MCF 10A (cell line): ENCODE measurements at regions of chr3 and their contacts with region 1.

Region 1: GRCh38 chr3:184154885-184155643 is at the start of gene DVL3:
- DNase-seq: peak; percentile 60
- H3K4me3 Mint-ChIP-seq: peak within 1 kb of the TSS; percentile 97
- H3K27ac Mint-ChIP-seq: peak within 1 kb of the TSS; percentile 93
- H3K4me1 Mint-ChIP-seq: peaks cover 13% of the 10 kb centered on the region
- H3K27me3 Mint-ChIP-seq: no peaks in the 10 kb centered on the region
- CTCF ChIP-seq: no peak
- total RNA-seq, gene DVL3: 73.4 and 74.5 TPM in 2 replicates

Region 2: DNA sequence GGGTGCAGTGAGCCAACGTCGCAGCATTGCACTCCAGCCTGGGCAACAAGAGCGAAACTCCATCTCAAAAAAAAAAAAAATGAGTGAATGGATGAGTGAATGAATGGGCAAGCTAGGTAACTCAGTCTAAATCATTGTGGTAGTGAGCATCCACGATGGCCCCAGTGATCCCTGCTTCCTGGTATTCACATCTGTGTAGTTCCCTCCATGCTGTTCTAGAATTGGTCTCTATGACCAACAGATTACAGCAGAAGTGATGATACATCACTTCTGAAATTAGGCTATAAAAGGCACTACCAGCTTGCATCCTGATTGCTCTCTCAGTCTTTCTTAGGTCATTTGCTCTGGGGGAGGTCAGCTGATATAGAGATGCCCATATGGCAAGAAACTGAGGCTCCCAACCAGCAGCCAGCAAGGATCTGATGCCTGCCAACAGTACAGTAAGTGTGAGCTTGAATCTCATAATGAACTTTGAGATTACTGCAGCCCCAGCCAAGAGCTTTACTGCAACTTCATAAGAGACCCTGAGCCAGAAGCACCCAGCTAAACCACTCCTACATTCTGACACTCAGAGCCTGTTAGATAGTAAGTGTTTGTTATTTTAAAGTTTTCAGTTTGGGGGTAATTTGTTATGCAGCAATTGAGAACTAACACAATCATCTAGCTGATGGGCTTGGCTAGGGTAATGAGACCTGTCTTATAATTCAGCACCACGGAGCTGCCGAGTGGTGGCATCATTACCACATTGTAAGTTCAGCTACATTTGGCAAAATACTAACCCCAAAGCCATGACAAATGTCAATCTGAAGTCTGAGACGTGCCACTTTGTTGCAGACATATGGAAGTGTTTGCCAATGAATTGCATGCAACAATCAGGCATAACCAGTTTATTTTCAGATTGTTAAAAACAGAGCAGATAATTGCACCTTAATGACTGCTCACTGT is 652.6 kb before region 1 on chr3:
- CTCF ChIA-PET with region 1: no interaction called
- POLR2A ChIA-PET with region 1: no interaction called
- intact Hi-C with region 1: no loop called
- DNase-seq: peak; percentile 27
- H3K4me3 Mint-ChIP-seq: no peak overlapping the region
- H3K27ac Mint-ChIP-seq: no peak overlapping the region
- H3K4me1 Mint-ChIP-seq: peaks cover 4% of the 10 kb centered on the region
- H3K27me3 Mint-ChIP-seq: no peaks in the 10 kb centered on the region
- CTCF ChIP-seq: peak; percentile 34

Region 3: DNA sequence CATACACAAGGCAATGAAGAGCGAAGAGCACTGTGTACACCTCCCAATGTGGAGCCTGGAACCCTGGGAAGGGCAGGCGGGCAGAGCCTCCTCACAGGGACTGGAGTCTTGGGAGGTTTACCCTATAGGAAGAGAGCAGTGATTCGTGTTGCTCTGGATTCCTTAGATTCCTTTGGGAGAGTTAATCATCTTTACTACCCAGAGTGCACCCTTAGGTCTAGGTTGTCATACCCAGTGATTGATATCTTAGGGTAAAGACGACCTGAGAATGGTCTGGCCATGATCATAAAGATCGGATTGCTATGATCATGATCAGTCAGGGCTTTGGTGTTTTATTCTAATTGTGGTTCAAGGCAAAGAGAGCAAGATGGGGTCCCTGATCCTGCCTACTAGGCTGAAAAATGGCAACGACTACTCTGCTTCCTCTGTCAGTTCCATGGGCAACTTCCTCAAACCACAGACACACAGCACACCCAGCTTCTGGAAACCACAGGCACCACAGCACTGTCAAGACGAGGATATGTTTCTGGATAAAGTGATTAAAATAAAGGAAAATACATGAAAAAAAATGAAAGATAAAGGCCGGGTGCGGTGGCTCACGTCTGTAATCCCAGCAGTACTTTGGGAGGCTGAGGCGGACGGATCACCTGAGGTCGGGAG is 309.3 kb before region 1 on chr3:
- CTCF ChIA-PET with region 1: no interaction called
- POLR2A ChIA-PET with region 1: no interaction called
- intact Hi-C with region 1: no loop called
- DNase-seq: no peak
- H3K4me3 Mint-ChIP-seq: no peak overlapping the region
- H3K27ac Mint-ChIP-seq: peak overlapping the region; percentile 84
- H3K4me1 Mint-ChIP-seq: peaks cover 17% of the 10 kb centered on the region
- H3K27me3 Mint-ChIP-seq: no peaks in the 10 kb centered on the region
- CTCF ChIP-seq: no peak

Region 4: DNA sequence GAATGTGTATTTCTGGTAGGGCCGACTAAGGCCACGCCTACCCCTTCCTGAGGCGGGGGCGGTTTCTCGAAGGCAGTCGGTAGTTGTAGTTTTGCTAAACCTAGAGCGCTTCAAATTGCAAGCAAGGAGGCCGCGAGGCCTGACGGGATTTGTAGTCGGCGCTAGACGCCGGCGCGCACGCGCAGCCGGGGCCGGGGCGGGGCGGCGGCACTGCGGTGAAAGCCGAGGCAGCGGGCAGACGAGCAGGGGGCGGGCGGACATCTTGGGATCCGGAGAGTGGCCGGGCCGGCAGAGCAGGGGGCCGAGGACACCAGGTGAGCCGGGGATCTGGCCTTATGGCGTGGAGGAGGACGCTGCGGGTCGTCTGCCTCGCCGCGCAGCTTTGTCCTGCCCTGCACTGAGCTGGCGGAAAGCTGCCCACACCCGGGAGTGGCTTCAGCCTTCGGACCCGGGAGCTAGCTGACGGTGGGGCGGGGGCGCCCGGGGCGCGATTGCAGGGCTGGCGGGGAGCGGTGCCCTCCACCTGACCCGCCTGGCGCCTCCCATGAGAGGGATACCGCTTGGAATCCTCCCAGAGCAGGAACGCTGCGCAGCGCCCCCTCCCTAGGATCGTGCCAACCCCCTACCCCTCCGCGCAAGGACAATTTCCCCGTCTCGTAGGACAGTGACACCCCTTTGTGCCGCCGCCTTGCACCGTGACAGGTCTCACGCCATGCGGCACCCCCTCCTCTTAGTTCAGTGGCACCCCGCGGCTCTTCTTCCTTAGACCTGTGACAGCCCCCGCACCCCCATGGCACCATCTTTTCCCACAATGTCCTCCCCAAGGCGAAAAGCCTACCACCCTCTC is 19.8 kb after region 1 on chr3 and contains the start of gene AP2M1:
- CTCF ChIA-PET with region 1: interaction called, 3 read pairs
- POLR2A ChIA-PET with region 1: interaction called, 24 read pairs
- intact Hi-C with region 1: loop called (anchors 2 kb)
- DNase-seq: peak; percentile 99
- H3K4me3 Mint-ChIP-seq: peak within 1 kb of the TSS; percentile 100
- H3K27ac Mint-ChIP-seq: peak within 1 kb of the TSS; percentile 95
- H3K4me1 Mint-ChIP-seq: peaks cover 29% of the 10 kb centered on the region
- H3K27me3 Mint-ChIP-seq: no peaks in the 10 kb centered on the region
- CTCF ChIP-seq: no peak
- total RNA-seq, gene AP2M1: 280 and 301 TPM in 2 replicates